Heart right ventricle (tissue), 16 donors: ENCODE measurements at regions of chr22 and their contacts with region 1.

Region 1: GRCh38 chr22:36325154-36326031 is 62.4 kb downstream of the MYH9 start:
- DNase-seq: peak in 1 of 2 donors; percentile 71
- ATAC-seq: peak in 6 of 8 donors; percentile 7 to 12 (median 10)
- H3K4me3 ChIP-seq: no peak overlapping the region
- H3K27ac ChIP-seq: peak overlapping the region; percentile 84 to 98 (median 96)
- H3K4me1 ChIP-seq: peaks cover 76 to 99% (median 94%) of the 10 kb centered on the region in 9 donors
- H3K27me3 ChIP-seq: no peaks in the 10 kb centered on the region
- CTCF ChIP-seq: no peak

Region 2: DNA sequence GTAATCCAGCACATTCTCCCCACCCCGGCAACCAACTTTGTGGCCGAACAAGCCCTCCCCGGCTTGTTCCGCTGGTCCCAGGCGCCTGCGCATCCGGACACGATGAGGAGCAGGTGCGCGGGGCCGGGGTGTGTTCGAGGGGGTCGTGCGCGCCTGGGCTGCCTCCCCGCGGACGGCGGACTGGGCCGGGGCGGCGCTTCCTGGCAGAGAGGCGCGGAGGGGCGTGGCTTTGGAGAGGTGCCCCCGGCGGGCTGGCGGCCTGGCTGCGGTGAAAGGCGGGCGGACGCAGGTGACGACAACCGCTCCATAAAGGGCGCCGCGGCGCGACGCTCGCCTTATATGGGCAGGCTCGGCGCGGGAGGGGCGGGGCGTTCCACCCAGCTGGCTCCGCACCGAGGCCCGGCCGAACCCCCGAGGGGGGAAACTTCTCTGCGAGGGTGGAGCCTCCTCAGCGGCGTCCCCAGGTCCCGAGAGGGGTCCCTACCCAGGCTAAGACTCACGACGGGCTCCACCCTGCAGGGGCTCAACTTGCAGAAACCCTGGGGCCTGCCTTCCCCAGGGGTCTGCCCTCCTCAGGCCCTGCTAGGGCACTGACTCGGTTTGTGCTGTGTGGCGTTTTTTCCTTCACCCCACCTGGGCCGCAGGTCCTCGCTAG is 129.7 kb after region 1 on chr22:
- intact Hi-C with region 1: loop called in 3 of 10 experiments (anchors 5 kb)
- DNase-seq: peak; percentile 93 to 94
- ATAC-seq: peak; percentile 85 to 92 (median 88)
- H3K4me3 ChIP-seq: peak overlapping the region in 9 of 10 donors; percentile 37 to 59 (median 54)
- H3K27ac ChIP-seq: peak overlapping the region; percentile 72 to 97 (median 94)
- H3K4me1 ChIP-seq: peaks cover 24 to 86% (median 65%) of the 10 kb centered on the region in 9 donors
- H3K27me3 ChIP-seq: no peaks in the 10 kb centered on the region
- CTCF ChIP-seq: peak in 4 of 9 donors; percentile 16 to 48 (median 40)

Region 3: DNA sequence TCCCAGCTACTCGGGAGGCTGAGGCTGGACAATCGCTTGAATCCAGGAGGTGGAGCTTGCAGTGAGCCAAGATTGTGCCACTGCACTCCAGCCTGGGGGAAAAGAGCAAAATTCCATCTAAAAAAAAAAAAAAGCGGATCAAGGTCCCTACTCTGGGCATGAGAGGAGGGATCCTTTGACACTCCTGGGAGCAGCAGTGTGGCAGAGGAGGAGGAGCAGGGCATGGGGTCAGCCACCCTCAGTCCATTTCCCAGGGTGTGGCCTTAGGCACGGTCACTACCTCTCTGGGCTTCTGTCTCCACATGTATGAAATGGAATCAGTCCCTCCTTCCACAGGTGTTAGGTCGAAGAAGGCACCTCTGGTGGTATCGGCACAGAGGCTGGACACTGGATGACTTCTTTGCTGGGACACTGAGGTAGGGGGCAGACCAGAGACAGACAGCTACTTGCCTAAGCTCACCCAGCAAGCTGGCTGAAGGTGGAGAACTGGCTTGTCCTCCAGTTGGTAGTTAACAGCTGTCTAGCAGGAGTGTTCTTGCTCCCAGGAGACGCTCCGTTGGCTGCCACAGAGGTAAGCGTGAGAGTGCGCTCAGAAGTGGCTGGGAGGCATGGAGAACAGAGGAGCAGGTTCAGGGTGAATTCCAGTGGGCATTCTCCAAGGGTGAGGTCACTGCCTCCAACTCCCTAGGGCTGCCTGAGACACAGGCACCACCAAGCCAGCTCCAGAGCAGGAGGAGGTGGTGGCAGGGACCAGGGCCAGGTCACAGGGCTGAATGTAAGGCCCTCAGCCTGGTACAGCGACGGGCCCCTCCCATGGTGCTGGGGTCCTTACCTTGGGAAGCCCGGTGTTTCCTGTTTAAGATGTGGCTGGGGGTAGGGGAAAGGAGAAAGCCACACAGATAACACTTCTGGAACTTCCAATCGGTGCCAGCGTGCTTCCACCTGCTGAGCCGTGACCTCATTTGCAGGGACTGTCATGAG is 136.6 kb after region 1 on chr22:
- intact Hi-C with region 1: loop called in 6 of 10 experiments (anchors 1 to 5 kb)
- DNase-seq: no peak
- ATAC-seq: peak in 6 of 8 donors; percentile 1 to 41 (median 22)
- H3K4me3 ChIP-seq: no peak overlapping the region
- H3K27ac ChIP-seq: peak overlapping the region; percentile 62 to 97 (median 90)
- H3K4me1 ChIP-seq: peaks cover 21 to 83% (median 73%) of the 10 kb centered on the region in 9 donors
- H3K27me3 ChIP-seq: no peaks in the 10 kb centered on the region
- CTCF ChIP-seq: no peak

Region 4: DNA sequence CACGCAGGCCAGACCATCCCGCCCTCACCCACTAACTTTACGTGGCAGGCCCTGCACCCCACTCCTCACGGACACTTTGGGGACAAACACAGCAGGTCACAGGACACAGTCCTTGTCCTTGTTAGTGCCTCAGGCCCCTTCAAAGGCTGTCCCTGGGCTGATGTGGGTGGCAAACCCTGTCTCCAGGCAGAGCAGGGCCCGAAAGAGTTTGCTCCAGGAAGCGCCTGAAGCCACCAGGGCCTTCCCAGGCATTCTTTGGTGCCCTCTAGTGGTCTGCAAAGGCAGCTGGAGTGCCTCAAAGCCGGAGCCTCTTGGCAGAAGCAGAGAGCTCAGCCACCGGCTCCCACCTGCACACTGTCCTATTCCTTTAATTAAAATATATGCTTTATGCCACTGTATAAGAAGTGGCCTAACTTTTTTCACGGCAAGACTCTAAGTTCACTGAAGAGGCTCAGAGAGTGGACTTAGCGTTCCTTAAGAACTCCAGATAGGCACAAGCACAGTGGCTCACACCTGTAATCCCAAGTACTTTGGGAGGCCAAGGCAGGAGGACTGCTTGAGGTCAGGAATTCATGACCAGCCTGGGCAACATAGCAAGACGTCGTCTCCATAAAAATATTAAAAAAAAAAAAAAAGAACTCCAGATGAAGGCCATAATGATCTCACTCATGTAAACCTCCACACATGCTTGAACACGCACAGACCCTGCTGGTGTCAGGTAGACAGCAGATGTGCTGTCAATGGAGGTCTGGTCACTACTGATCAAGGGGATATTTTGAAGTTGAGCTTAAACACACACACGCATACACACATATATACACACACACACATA is 145.0 kb after region 1 on chr22:
- intact Hi-C with region 1: loop called in 6 of 10 experiments (anchors 1 to 5 kb)
- DNase-seq: peak; percentile 74 to 87
- ATAC-seq: peak; percentile 61 to 79 (median 74)
- H3K4me3 ChIP-seq: no peak overlapping the region
- H3K27ac ChIP-seq: peak overlapping the region in 9 of 10 donors; percentile 66 to 97 (median 94)
- H3K4me1 ChIP-seq: peaks cover 15 to 79% (median 54%) of the 10 kb centered on the region in 9 donors
- H3K27me3 ChIP-seq: no peaks in the 10 kb centered on the region
- CTCF ChIP-seq: peak in 8 of 9 donors; percentile 92 to 98 (median 97)

Region 5: DNA sequence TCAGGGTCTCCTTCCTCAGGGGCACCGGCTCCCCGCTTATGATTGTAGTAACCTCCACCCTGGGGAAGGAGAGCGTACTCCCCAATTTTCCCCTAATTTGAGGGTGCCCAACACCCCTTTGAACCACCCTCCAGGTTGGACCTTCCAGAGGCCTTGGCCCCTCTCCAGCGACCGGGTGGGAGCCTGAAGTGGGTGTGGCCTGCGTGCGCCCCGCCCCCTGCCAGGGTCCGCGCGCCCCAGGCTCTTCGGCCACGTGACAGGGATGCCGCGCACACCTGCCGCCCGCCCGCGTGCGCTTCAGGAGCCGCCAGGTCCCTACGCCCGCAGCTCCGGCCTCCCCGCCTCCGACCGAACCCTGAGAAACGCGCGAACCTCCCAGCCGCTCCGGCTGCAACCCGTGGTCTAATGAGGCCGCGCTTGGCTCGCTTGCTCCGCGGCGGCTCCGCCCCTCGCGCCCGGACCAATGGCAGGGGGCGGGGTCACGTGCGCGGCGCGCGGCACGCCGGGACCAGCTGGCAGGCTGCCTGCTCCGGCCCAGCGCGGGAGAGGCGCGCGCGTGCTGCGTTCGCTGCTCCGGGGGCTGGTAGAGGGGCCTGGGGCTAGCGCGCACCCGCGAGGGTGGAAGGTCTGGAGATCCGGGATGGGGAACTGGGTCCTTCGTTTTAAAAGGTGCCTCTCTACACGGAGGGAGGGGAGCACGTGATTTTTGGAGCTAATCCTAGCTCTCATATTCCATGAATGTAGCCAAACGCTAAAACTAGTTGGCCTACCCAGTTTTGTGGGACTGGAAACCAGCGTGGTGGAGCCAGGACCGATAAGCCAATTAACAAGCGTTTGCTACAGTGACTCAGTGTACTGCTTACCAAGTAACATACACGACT is 181.5 kb after region 1 on chr22 and contains the start of gene FOXRED2:
- intact Hi-C with region 1: no loop called
- DNase-seq: peak; percentile 88 to 92
- ATAC-seq: peak; percentile 80 to 95 (median 88)
- H3K4me3 ChIP-seq: peak within 1 kb of the TSS; percentile 26 to 78 (median 62)
- H3K27ac ChIP-seq: peak within 1 kb of the TSS in 9 of 10 donors; percentile 56 to 86 (median 77)
- H3K4me1 ChIP-seq: peaks cover 0 to 39% (median 21%) of the 10 kb centered on the region in 9 donors
- H3K27me3 ChIP-seq: no peaks in the 10 kb centered on the region
- CTCF ChIP-seq: no peak
- total RNA-seq, gene FOXRED2: 6.3 to 15.7 (median 8.6) TPM